Breast epithelium (tissue), 4 donors: ENCODE measurements at regions of chr3 and their contacts with region 1.

Region 1: GRCh38 chr3:152480282-152480953 is 211.7 kb downstream of the MBNL1 start:
- DNase-seq: no peak
- H3K4me3 ChIP-seq: no peak overlapping the region
- H3K27ac ChIP-seq: no peak overlapping the region
- H3K4me1 ChIP-seq: no peaks in the 10 kb centered on the region
- H3K27me3 ChIP-seq: no peaks in the 10 kb centered on the region
- CTCF ChIP-seq: no peak
- POLR2A ChIP-seq: no peak

Region 2: GRCh38 chr3:151327571-151328198 is 1152.7 kb before region 1 on chr3:
- intact Hi-C with region 1: loop called (anchors 10 kb)
- DNase-seq: no peak
- H3K4me3 ChIP-seq: peak overlapping the region in 2 of 3 donors; percentile 19 to 34
- H3K27ac ChIP-seq: peak overlapping the region; percentile 3 to 27
- H3K4me1 ChIP-seq: no peaks in the 10 kb centered on the region
- H3K27me3 ChIP-seq: no peaks in the 10 kb centered on the region
- CTCF ChIP-seq: peak; percentile 28 to 46 (median 40)
- POLR2A ChIP-seq: no peak

Region 3: GRCh38 chr3:151644020-151644620 is 836.3 kb before region 1 on chr3:
- intact Hi-C with region 1: no loop called
- DNase-seq: no peak
- H3K4me3 ChIP-seq: no peak overlapping the region
- H3K27ac ChIP-seq: no peak overlapping the region
- H3K4me1 ChIP-seq: no peaks in the 10 kb centered on the region
- H3K27me3 ChIP-seq: no peaks in the 10 kb centered on the region
- CTCF ChIP-seq: no peak
- POLR2A ChIP-seq: no peak

Region 4: GRCh38 chr3:151912028-151912427 is 568.4 kb before region 1 on chr3:
- intact Hi-C with region 1: no loop called
- DNase-seq: no peak
- H3K4me3 ChIP-seq: no peak overlapping the region
- H3K27ac ChIP-seq: no peak overlapping the region
- H3K4me1 ChIP-seq: no peaks in the 10 kb centered on the region
- H3K27me3 ChIP-seq: no peaks in the 10 kb centered on the region
- CTCF ChIP-seq: no peak
- POLR2A ChIP-seq: no peak

Region 5: DNA sequence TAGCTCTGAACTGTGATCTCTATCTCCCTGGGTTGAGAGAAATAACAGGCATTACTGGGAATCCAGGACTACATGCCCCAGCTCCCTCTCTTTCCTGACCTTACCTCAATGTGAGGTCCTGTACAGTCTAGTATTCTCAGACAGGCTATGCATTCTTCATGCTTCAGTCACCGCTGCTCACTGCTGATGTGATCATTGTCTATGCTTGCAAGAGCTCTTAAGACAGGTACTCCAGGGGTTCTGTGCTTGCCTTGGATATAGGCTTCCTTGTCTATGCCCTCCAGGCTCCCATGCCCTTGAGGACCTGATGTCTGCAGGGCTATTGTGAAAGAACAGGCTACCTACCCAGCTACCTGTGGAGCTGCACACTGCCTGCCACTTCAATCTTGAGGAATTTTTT is 28.1 kb before region 1 on chr3:
- intact Hi-C with region 1: no loop called
- DNase-seq: no peak
- H3K4me3 ChIP-seq: no peak overlapping the region
- H3K27ac ChIP-seq: no peak overlapping the region
- H3K4me1 ChIP-seq: no peaks in the 10 kb centered on the region
- H3K27me3 ChIP-seq: no peaks in the 10 kb centered on the region
- CTCF ChIP-seq: no peak
- POLR2A ChIP-seq: no peak

Region 6: GRCh38 chr3:153829606-153830170 is 1349.3 kb after region 1 on chr3:
- intact Hi-C with region 1: no loop called
- DNase-seq: no peak
- H3K4me3 ChIP-seq: no peak overlapping the region
- H3K27ac ChIP-seq: no peak overlapping the region
- H3K4me1 ChIP-seq: no peaks in the 10 kb centered on the region
- H3K27me3 ChIP-seq: no peaks in the 10 kb centered on the region
- CTCF ChIP-seq: no peak
- POLR2A ChIP-seq: no peak